ENCODE measurements at regions of chr1 and their contacts with region 1.

Region 1: GRCh38 chr1:205977402-205978014 is 25.7 kb downstream of the RAB7B start:
- DNase-seq: peak; percentile 82
- H3K4me3 Mint-ChIP-seq: no peak overlapping the region
- H3K27ac Mint-ChIP-seq: no peak overlapping the region
- H3K4me1 Mint-ChIP-seq: no peaks in the 10 kb centered on the region
- H3K27me3 Mint-ChIP-seq: peaks cover 2% of the 10 kb centered on the region

Region 2: DNA sequence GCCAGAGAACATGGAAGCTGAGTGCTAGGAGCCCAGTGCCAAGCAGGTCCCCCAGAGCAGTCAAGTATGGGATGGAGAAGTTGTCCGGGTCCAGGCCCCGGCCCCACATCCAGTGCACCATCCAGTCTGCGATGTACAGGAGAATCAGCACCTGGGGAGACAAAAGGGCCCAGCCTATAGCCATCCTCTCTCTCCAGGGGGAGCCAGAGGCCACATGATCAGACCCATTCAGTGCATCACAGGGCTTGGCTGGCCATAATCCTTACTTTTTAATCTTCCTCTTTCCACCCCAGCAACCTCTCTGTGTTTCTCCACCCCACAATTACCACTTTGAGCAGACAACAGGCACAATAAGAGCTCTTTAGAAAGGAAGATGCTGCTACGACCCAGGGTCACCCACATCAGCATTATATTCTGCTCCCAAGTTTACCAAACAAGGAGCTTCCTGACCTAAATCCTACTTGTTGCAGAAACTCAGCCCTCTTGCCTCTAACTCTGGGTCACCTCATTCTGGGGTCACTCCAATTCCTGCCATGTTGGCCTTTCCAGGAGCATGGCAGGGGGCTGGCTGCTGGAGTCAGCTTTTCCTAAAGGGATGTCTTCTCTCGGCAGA is 185.8 kb before region 1 on chr1:
- CTCF ChIA-PET with region 1: interaction called, 230 read pairs
- POLR2A ChIA-PET with region 1: interaction called, 9 read pairs
- intact Hi-C with region 1: loop called (anchors 1 kb)
- DNase-seq: peak; percentile 73
- H3K4me3 Mint-ChIP-seq: no peak overlapping the region
- H3K27ac Mint-ChIP-seq: no peak overlapping the region
- H3K4me1 Mint-ChIP-seq: peaks cover 2% of the 10 kb centered on the region
- H3K27me3 Mint-ChIP-seq: no peaks in the 10 kb centered on the region

Region 3: DNA sequence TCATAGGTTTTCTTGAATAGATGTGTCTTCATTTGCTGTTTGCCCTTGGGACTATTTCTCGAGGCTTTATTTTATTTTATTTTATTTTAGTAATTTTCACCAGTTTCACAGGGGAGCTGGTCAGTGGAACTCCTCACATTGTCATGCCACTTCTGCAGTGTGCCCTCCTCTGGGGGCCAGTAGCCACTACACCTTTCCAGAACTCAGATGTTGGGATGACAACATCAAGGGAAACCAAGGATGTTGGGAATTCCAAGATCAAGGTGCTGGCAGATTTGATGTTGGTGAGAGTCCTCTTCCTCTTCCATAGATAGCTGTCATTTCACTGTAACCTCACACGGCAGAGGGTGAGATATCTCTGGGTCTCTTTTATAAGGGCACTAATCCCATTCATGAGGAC is 69.7 kb before region 1 on chr1:
- CTCF ChIA-PET with region 1: interaction called, 13 read pairs
- POLR2A ChIA-PET with region 1: no interaction called
- intact Hi-C with region 1: no loop called
- DNase-seq: no peak
- H3K4me3 Mint-ChIP-seq: no peak overlapping the region
- H3K27ac Mint-ChIP-seq: no peak overlapping the region
- H3K4me1 Mint-ChIP-seq: no peaks in the 10 kb centered on the region
- H3K27me3 Mint-ChIP-seq: no peaks in the 10 kb centered on the region

Region 4: DNA sequence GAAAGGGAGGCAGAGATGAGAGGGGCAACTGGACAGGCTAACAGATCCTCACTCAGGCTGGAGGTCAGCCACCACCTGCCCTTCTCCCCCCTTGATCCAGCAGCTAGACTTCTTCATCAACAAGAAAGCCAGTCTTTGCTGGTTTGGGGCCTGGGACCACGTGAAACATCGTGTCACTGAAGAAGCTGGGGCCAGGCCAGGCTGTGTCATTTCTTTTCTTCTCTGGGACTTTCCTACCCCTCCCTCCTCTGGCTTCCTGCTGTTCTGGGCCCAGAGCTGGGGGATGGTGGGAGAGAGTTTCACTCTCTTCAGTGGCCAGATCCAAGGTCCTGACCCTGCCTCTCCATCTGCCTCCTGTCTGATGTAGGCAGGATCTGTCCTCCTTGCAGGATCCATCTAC is 16.1 kb before region 1 on chr1:
- CTCF ChIA-PET with region 1: interaction called, 46 read pairs
- POLR2A ChIA-PET with region 1: no interaction called
- intact Hi-C with region 1: no loop called
- DNase-seq: peak; percentile 63
- H3K4me3 Mint-ChIP-seq: no peak overlapping the region
- H3K27ac Mint-ChIP-seq: no peak overlapping the region
- H3K4me1 Mint-ChIP-seq: peaks cover 4% of the 10 kb centered on the region
- H3K27me3 Mint-ChIP-seq: peaks cover 5% of the 10 kb centered on the region

Region 5: DNA sequence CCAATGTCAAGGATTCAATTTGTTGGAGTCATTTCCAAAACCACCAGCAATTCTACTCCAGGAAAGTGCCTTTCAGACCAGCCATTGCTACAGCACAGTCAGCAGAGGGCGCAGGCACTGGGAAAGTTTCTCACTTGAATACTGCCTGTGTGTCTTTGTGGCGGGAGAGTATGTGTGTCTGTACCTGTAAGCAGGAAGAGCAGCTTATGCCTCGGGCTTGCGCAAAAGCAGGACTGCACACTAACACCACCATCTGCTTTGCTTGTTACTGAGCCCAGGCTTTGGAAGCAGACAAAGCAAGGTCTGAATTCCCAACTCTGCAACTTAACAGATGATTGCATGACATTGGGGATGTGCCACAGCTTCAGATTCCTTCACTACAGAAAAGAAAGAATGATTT is 53.2 kb after region 1 on chr1:
- CTCF ChIA-PET with region 1: interaction called, 15 read pairs
- POLR2A ChIA-PET with region 1: no interaction called
- intact Hi-C with region 1: no loop called
- DNase-seq: peak; percentile 79
- H3K4me3 Mint-ChIP-seq: no peak overlapping the region
- H3K27ac Mint-ChIP-seq: no peak overlapping the region
- H3K4me1 Mint-ChIP-seq: peaks cover 6% of the 10 kb centered on the region
- H3K27me3 Mint-ChIP-seq: peaks cover 4% of the 10 kb centered on the region